A673 (cell line): ENCODE measurements at regions of chr14 and their contacts with region 1.

Region 1: DNA sequence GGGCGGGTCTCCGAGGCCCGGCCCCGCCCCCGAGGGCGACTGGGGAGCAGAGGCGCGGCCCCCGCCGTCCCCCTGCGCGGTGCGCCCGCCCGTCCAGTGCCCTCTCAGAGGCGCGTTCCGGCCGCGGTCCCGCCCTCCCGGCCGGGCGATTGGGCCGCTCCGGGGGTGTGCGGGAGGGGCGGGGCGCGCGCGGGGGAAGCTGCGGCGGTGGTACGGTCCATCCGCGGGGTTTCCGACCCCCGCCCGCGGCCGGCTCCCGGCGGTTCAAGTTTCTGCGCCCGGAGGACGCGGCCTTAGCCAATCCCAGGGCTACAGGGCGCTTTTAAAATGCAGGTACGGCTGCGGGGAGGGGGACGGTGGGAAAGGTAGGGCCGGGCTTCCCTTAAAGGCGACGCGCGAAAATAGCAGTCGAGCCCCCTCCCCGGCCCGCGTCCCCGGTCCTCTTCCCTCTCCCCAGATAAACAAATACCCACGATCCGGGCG is 317 bp upstream of the CCDC85C start:
- DNase-seq: peak; percentile 98
- H3K4me3 ChIP-seq: peak overlapping the region; percentile 85
- H3K27ac ChIP-seq: peak overlapping the region; percentile 89
- H3K4me1 ChIP-seq: peaks cover 24% of the 10 kb centered on the region
- H3K27me3 ChIP-seq: no peaks in the 10 kb centered on the region
- CTCF ChIP-seq: no peak

Region 2: DNA sequence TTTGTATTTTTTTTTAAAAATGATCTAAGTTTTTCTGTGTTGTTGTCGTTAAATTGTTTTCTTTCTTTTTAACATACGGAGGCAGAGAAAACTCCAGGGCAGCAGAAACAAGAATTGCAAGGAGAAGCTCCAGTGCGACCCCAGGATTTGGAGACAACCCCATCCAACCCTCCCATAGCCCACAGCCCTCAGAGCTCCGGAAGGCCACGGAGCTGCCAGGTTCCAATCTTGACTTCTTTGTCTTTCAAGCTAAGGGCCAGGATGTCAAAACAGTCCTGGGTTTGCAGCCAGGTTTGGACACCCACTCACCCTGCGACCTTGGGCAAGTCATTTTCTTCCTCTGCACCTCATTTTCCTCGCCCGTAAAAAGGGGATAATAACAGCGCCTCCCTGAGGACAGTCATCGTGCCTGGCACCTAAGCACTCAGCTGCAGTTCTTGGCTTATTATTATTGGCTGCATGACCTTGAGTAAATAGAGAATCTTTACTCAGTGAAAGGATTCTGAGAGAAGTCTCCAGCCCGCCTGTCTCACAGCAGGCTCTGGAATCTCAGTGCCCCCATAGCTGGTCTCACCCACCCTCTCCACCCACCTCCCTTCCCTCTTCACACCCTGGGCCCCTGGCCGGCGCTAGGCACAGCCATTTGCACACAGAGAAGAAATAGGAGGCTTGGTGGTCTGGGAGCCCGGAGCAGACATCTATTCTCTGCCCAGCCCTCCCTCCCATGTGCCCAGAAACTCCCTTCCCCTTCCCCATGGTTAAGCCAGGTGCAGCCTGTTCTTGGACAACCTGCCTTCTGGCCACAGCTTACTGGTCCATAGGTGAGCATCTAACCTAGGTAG is 252.9 kb before region 1 on chr14:
- CTCF ChIA-PET with region 1: interaction called, 11 read pairs
- POLR2A ChIA-PET with region 1: no interaction called
- intact Hi-C with region 1: no loop called
- DNase-seq: no peak
- H3K4me3 ChIP-seq: no peak overlapping the region
- H3K27ac ChIP-seq: no peak overlapping the region
- H3K4me1 ChIP-seq: peaks cover 9% of the 10 kb centered on the region
- H3K27me3 ChIP-seq: no peaks in the 10 kb centered on the region
- CTCF ChIP-seq: peak; percentile 30; the same call in 1 of the 2 replicates

Region 3: GRCh38 chr14:99531251-99532096 is 72.8 kb before region 1 on chr14:
- CTCF ChIA-PET with region 1: no interaction called
- POLR2A ChIA-PET with region 1: no interaction called
- intact Hi-C with region 1: loop called (anchors 2 kb)
- DNase-seq: peak; percentile 90
- H3K4me3 ChIP-seq: no peak overlapping the region
- H3K27ac ChIP-seq: peak overlapping the region; percentile 53
- H3K4me1 ChIP-seq: peaks cover 17% of the 10 kb centered on the region
- H3K27me3 ChIP-seq: no peaks in the 10 kb centered on the region
- CTCF ChIP-seq: no peak

Region 4: GRCh38 chr14:99698642-99699041 is 94.3 kb after region 1 on chr14:
- CTCF ChIA-PET with region 1: no interaction called
- POLR2A ChIA-PET with region 1: no interaction called
- intact Hi-C with region 1: no loop called
- DNase-seq: no peak
- H3K4me3 ChIP-seq: no peak overlapping the region
- H3K27ac ChIP-seq: no peak overlapping the region
- H3K4me1 ChIP-seq: no peaks in the 10 kb centered on the region
- H3K27me3 ChIP-seq: no peaks in the 10 kb centered on the region
- CTCF ChIP-seq: no peak